Activated T-helper 1 cell treated with anti-CD3 and anti-CD28 coated beads, Interleukin-12 subunit alpha, Interleukin-12 subunit beta, Interleukin-2, Interleukin-4 antibody, amounts not matched to agents 30 ng/mL and 10 ng/mL and 1 ng/mL, durations not matched to agents 14 hours and 24 hours and 36 hours (primary cell): ENCODE measurements at regions of chr7 and their contacts with region 1.

Region 1: DNA sequence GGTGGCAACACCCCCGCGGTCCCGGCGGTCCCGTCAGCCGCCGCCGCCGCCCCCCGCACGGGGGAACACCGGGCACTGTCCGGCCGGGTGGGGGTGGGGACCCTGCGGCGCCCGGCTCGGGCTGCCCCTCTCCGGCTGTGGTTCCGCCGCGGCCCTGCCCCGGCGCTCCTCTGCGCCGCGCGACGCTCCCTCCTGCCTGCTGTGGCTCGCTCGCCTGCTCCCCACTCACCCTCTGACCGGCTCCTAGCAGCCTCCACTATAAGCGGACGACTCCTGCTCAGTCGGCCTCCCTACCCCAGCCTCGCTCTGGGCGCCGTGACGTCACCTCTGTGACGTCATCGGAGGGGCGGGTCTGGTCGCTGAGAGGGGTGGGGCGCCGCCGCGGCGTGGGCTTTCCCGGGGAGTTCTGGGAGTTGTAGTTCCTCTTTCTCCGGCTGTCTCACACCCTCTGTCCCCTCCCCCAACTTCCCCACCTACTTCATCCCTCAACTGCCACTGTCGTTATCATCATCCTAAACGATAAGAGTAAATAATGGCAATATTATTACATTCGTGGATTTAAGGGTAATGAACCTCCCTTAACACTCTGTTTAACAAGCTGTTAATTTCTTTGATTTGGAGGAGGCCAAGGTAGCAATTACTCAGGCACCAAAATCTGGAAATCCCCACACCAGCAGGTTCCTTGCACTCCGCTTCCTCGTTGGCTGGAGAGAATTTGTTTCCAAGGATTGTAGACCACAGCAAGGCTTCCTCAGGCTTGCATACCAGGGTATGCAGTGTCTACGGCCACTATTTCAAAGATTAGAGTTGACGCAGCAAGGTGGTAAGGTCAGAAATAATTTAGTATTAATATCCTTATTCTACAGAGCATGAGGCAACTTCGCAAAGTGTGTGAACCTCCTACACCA is at the start of gene UBE2H:
- DNase-seq: peak; percentile 83
- H3K4me3 Mint-ChIP-seq: peak within 1 kb of the TSS; percentile 98
- H3K27ac Mint-ChIP-seq: peak within 1 kb of the TSS; percentile 100
- H3K4me1 Mint-ChIP-seq: peaks cover 10% of the 10 kb centered on the region
- H3K27me3 Mint-ChIP-seq: peaks cover 20% of the 10 kb centered on the region
- total RNA-seq, gene UBE2H: 27.1 TPM in 2 replicates

Region 2: DNA sequence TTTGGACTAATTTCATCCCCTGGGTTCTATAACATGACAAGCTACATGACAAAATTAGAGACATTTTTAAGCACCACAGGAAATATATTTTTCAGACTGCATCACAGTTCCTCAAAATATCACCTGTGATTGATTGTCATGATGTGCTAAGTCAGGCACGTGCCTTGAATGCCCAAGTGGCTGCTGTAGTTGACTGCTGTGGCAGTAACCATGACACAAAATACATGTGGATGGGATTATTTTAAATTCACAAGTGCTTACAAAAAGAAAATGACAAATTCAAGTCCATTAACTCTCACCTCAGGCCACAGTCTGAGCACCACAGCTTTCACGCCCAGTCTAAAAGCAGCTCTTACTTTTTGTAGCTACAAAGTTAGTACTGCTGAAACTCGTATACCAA is 943.5 kb before region 1 on chr7:
- intact Hi-C with region 1: loop called (anchors 5 kb)
- DNase-seq: no peak
- H3K4me3 Mint-ChIP-seq: no peak overlapping the region
- H3K27ac Mint-ChIP-seq: peak overlapping the region; percentile 77
- H3K4me1 Mint-ChIP-seq: peaks cover 29% of the 10 kb centered on the region
- H3K27me3 Mint-ChIP-seq: no peaks in the 10 kb centered on the region

Region 3: DNA sequence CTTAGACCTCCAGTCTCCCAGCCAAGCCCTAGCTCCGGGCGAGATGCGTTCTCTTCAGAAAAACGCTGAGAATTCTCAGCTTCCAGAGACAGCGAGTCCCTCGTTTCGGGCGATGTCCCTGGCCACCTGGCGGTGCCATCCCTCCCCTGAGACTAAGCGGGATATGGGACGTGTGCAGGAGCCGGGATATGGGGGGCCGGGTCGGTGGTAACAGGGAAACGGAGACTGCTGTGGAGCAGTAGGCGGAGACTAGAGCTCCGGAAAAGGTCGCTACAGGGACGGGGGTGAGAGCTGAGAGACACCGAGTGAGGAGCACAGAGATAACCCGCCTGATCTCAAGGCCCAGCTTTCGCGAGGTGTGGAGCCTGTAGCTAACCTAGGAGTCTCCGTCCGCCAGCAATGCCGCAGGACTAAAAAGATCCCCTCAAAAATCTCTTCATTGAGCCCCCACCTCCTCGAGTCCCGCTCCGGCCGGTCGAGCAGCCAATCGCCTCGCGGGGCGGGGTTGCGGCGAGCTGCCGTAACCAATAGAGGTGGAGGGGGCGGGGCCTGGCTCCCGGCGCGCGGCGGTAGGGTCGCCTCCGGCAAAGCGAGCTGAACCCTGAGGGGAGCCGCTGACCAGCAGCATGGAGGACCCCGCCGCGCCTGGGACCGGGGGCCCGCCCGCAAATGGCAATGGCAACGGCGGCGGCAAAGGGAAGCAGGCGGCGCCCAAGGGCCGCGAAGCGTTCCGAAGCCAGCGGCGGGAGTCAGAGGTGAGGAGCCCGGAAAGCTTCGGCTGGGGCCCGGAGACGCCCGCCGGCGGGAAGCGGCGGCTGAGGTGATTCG is 518.8 kb before region 1 on chr7 and contains the start of gene STRIP2:
- intact Hi-C with region 1: loop called (anchors 2 kb)
- DNase-seq: peak; percentile 94
- H3K4me3 Mint-ChIP-seq: peak within 1 kb of the TSS; percentile 95
- H3K27ac Mint-ChIP-seq: peak within 1 kb of the TSS; percentile 92
- H3K4me1 Mint-ChIP-seq: peaks cover 35% of the 10 kb centered on the region
- H3K27me3 Mint-ChIP-seq: no peaks in the 10 kb centered on the region
- total RNA-seq, gene STRIP2: 74.0 and 79.4 TPM in 2 replicates

Region 4: DNA sequence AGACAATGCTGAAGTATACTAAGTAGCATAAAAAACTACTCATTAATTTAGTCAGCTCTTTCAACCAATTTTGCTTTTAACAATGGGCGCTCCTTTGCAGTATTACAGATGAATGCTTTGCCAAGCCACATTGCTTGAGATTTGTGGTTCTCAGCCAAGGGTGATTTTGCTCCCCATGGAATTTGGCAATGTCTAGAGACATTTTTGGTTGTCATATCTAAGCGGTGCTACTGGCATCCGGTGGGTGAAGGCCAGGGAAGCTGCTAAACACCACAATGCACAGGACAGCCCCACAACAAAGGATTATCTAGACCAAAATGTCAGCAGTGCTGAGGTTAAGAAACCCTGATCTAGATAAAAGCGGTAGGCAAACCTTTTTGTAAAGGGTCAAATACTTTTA is 112.2 kb before region 1 on chr7:
- intact Hi-C with region 1: loop called (anchors 5 kb)
- DNase-seq: no peak
- H3K4me3 Mint-ChIP-seq: no peak overlapping the region
- H3K27ac Mint-ChIP-seq: no peak overlapping the region
- H3K4me1 Mint-ChIP-seq: peaks cover 30% of the 10 kb centered on the region
- H3K27me3 Mint-ChIP-seq: no peaks in the 10 kb centered on the region

Region 5: DNA sequence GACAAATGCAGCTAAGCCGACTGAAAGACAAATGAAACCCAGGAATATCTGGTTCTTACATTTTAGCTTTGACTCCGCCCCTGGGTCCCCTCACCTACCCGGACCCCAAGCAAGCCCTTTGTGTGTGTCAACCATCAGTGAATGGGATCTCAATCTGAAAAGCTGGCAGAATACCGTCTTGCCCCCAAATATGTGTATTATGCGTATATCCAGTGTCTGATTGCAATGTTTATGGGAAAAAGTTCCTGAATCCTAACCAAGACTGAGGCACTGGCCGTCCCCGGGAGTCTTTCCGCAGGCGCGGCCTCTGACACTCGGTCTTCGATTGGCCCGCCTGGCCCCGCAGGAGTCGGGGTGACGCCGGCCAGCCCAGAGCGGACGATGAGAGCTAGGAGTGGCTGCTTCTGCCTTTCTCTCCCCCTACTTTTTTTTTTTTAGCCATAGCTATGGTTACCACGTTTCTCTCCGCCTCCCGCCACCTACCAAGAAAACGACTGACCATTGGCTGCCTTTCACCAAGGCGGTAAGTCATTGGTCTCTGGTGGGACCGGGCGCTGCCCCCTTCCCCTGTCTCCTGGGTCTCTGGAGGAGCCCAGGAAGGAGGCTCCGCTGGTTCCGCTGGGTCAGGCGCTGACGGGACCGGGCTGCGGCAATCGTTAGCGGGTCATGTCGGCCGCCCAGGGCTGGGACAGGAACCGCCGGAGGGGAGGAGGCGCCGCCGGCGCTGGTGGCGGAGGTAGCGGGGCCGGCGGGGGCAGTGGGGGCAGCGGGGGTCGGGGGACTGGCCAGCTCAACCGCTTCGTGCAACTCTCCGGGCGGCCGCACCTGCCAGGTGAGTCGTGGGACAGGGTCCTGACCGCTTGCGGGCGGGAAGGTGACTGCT is 117.3 kb after region 1 on chr7 and contains the start of gene KLHDC10:
- intact Hi-C with region 1: loop called (anchors 2 kb)
- DNase-seq: peak; percentile 93
- H3K4me3 Mint-ChIP-seq: peak within 1 kb of the TSS; percentile 93
- H3K27ac Mint-ChIP-seq: peak within 1 kb of the TSS; percentile 91
- H3K4me1 Mint-ChIP-seq: peaks cover 39% of the 10 kb centered on the region
- H3K27me3 Mint-ChIP-seq: no peaks in the 10 kb centered on the region
- total RNA-seq, gene KLHDC10: 13.2 and 15.6 TPM in 2 replicates

Region 6: DNA sequence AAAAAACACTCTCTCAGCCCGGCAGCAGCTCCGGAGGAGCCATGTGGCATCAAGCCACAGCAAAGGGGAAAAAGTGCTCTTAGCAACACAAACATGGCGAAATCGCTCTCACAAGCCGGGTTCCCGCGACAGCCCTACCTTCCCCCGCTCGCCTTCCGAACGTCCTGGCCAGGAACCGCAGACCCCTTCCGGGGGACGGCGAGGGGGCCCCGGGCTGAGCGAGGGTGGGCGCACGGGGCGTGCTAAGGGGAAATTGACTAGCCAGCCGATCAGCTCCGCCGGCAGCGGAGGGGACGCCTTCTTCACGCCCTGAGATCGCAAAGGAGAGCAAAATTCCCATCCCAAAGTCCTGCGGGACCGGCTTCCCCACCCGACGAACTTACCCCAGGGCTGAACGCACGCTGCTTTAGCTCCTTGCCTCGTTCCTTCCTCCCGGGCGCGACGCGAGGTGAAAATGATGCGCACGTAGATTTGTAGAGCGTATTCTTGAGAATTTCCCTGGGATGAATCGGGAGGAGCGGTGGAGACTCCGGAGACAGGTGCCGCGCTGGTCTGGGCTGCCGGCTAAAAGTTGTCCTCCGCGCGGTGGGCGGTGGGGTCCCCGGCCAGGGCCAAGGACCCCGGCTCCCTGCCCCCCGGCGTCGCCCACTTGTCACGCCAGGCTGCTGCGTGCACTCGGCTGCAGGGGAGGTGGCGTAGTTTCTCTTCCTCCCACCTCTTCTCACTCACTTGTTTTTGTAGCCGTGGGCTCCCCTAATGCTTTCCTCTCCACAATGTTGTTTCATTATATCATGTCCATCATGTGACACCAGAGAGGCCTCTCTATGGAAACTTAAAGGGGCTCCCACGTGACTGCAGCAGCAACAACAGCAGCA is 1154.7 kb after region 1 on chr7:
- intact Hi-C with region 1: loop called (anchors 2 kb)
- DNase-seq: peak; percentile 75
- H3K4me3 Mint-ChIP-seq: peak overlapping the region; percentile 99
- H3K27ac Mint-ChIP-seq: peak overlapping the region; percentile 100
- H3K4me1 Mint-ChIP-seq: peaks cover 65% of the 10 kb centered on the region
- H3K27me3 Mint-ChIP-seq: no peaks in the 10 kb centered on the region